ENCODE measurements at regions of chr19 and their contacts with region 1.

Region 1: DNA sequence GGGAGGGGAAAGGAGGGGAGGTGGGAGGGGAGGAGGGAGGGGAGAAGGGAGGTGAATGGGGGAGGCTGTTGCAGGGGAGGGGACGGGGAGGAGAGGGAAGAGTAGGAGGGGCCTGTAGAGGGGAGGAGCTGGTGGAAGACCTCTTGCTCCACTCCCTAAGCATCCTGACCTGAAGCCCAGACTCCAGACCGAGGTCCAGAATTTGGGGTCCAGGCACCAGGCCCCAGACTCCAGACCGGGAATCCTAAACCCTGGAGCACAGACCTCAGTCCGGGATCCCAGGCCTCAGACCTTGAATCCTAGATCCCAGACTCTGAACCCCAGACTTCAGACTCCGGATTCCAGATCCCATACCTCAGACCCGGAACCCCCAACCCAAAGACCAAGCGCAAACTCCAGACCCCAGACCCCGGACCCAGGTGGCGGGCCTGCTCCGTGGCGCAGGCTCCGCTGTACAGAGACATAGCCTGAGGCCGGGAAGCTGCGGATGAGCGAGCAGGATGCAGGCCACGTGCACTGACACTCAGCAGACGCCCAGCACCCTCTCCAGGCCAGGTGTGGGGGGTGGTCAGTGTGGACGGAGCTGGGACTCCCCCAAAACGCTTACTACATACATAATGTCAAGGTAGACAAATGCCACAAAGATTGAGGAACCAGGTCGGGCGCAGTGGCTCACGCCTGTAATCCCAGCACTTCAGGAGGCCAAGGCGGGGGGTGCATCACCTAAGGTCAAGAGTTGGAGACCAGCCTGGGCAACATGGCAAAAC is 710 bp upstream of the BTBD2 start:
- DNase-seq: peak; percentile 82
- H3K4me3 ChIP-seq: peak overlapping the region; percentile 70
- H3K27ac ChIP-seq: peak overlapping the region; percentile 51
- H3K4me1 ChIP-seq: peaks cover 20% of the 10 kb centered on the region
- CTCF ChIP-seq: no peak

Region 2: DNA sequence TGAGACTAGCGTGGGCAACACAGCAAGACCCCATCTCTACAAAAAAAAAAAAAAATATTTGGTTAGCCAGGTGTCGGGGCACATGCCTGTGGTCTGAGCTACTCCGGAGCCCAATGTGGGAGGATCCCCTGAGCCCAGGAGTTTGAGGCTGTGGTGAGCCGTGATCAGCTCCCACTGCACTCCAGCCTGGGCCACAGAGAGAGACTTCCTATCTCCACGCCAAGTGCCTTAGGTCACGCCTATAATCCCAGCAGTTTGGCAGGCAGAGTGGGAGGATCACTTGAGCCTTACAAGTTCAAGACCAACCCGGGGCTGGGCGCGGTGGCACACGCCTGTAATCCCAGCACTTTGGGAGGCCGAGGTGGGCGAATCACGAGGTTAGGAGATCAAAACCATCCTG is 119.7 kb before region 1 on chr19:
- CTCF ChIA-PET with region 1: no interaction called
- POLR2A ChIA-PET with region 1: no interaction called
- intact Hi-C with region 1: loop called (anchors 5 kb)
- DNase-seq: no peak
- H3K4me3 ChIP-seq: peak overlapping the region; percentile 33
- H3K27ac ChIP-seq: peak overlapping the region; percentile 77
- H3K4me1 ChIP-seq: peaks cover 41% of the 10 kb centered on the region
- CTCF ChIP-seq: no peak

Region 3: DNA sequence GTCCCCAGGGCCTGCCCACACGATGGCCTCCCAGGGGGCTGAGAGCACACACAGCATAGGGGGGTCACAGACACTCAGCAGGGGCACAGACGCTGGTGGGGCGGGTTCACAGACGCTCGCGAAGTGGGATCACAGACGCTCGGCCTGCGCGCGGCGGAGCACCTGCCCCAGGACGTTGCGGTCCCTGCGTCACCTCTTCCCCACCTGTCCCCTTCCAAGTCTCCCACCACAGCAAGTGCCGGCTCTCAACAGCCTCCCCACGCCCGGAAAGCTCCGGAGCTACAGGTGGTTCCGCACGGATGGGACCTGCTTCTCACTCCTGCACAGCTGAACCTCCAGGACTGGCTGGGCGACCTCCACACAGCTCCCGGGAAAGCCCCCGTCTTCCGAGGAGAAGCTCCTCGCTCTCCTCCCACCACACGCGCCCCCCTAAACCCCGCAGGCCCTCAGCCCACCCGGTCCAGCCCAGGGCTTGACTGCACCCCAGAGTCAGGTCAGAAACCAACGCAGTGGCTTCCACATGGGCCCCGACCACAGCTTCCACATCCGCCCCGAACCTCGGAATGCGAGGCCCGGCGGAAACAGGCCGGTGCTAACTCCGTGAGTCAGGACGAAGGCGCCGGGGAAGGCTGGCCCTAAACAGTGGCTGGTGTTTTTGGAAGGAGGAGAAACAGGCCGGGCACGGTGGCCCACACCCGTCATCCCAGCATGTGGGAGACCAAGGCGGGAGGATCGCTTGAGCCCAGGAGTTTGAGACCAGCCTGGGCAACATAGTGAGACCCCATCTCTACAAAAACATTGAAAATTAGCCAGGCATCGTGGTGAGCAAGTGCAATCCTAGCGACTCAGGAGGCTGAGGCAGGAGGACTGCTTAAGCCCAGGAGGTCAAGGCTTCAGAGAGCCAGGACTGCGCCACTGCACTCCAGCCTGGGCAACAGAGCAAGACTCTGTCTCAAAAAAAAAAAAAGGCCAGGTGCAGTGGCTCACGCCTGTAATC is 17.2 kb before region 1 on chr19:
- CTCF ChIA-PET with region 1: no interaction called
- POLR2A ChIA-PET with region 1: no interaction called
- intact Hi-C with region 1: no loop called
- DNase-seq: no peak
- H3K4me3 ChIP-seq: no peak overlapping the region
- H3K27ac ChIP-seq: no peak overlapping the region
- H3K4me1 ChIP-seq: no peaks in the 10 kb centered on the region
- CTCF ChIP-seq: no peak

Region 4: DNA sequence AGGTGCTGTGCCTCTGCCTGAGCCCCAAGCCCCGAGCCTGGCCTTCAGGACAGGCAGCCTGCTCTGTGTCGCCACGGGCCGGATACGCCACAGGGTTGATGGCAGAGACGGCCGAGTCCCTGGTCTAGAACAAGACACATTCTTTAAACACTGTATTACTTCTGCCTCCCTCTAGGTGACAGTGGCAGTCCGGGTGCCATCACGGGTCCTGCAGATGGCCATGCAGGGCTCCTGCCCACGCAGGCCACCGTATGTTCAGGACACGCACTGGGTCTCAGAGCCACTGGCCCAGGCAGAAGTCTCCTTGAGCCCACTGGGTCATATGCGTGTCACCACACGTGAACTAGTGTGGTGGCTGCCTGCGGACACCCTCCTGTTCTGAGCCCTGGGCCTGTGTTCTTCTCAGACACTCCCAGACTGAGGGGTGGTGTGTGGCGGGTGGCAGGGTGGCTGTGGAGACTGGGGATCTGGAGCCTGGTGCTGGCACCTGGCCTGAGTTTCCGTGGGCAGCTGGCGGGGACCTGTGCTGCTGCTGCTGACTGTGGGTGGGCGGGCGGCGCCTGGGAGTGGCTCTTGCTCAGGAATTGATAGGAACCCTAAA is 215.5 kb after region 1 on chr19:
- CTCF ChIA-PET with region 1: no interaction called
- POLR2A ChIA-PET with region 1: no interaction called
- intact Hi-C with region 1: no loop called
- DNase-seq: peak; percentile 50
- H3K4me3 ChIP-seq: no peak overlapping the region
- H3K27ac ChIP-seq: peak overlapping the region; percentile 23
- H3K4me1 ChIP-seq: peaks cover 66% of the 10 kb centered on the region
- CTCF ChIP-seq: peak; percentile 61; the same call in 1 of the 2 replicates

Region 5: DNA sequence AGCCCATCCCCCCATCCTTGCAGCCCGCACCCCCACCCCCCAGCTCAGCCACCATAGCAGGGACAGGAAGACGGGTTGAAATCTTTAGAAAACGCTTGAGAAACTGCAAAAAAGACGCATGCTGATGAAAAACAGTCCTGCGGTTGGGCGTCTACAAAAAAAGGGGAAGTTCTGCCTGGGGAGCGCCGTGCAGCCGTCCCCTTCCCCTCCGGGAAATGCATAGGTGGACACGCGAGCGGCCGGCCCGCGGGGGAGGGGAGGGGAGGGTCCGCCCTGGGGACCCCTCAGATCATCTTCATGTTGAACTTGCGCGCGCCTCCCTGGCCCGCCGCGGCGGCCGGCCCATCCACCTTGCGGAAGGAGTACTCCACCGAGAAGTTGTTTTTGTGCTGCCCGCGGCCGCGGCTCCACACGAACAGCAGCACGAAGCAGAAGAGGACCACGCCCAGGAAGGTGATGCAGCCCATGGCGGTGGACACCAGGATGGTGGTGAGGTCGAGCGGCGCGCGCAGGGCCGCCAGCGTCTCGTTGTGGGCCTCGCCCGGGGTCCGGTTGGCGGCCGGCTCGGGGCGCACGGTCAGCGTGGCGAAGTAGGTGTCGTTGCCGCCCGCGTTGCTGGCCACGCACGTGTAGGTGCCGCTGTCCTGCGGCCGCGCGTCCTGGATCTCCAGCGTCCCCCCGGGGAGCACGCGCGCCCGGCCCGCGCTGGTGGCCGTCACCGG is 273.7 kb after region 1 on chr19:
- CTCF ChIA-PET with region 1: no interaction called
- POLR2A ChIA-PET with region 1: no interaction called
- intact Hi-C with region 1: no loop called
- DNase-seq: peak; percentile 90
- H3K4me3 ChIP-seq: peak overlapping the region; percentile 73
- H3K27ac ChIP-seq: peak overlapping the region; percentile 86
- H3K4me1 ChIP-seq: peaks cover 41% of the 10 kb centered on the region
- CTCF ChIP-seq: no peak